Natural killer cell (primary cell): ENCODE measurements at regions of chr11 and their contacts with region 1.

Region 1: DNA sequence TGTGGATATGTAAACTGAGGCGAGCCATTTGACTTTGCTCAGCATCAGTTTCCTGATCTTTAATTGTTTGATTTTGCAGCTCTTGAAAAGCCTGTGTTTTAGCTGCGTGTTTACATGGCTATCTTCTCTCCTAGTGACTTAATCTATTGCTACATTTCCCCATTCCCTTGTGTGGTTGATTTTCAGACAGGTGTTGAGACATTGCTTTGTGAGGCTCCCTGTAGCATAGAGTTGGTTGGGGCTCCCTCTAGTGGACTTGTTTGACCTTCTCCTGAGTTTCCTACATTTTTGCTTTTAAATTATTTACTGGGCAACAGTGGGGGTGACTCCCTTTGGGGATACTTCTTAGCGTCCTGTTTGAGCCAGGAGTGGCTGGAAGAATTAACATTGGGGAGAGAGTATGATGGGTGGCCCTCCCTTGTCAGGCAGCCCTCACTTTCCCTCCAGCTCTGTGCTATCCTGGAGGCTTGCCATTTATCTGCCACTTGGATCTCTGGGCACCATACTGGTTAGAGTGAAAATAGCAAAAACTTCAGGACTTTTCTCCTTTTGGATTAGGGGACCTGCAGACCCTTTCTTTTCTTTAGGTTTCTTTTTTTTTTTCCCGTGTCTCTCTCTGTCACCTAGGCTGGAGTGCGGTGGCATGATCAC is 9.2 kb upstream of the CBL start:
- DNase-seq: peak; percentile 36 to 91
- ATAC-seq: peak; percentile 89 to 98 (median 96)
- H3K4me3 ChIP-seq: no peak overlapping the region
- H3K4me3 Mint-ChIP-seq: no peak overlapping the region
- H3K27ac ChIP-seq: no peak overlapping the region
- H3K27ac Mint-ChIP-seq: no peak overlapping the region
- H3K4me1 ChIP-seq: no peaks in the 10 kb centered on the region
- H3K4me1 Mint-ChIP-seq: peaks cover 0 to 9% of the 10 kb centered on the region in 2 donors
- H3K27me3 ChIP-seq: no peaks in the 10 kb centered on the region
- H3K27me3 Mint-ChIP-seq: peaks cover 7 to 8% of the 10 kb centered on the region in 2 donors
- CTCF ChIP-seq: peak; percentile 76

Region 2: GRCh38 chr11:119115484-119116234 is 81.3 kb before region 1 on chr11:
- intact Hi-C with region 1: no loop called
- DNase-seq: peak in 1 of 2 donors; percentile 70
- ATAC-seq: no peak
- H3K4me3 ChIP-seq: no peak overlapping the region
- H3K4me3 Mint-ChIP-seq: no peak overlapping the region
- H3K27ac ChIP-seq: no peak overlapping the region
- H3K27ac Mint-ChIP-seq: peak overlapping the region in 1 of 2 donors; percentile 63
- H3K4me1 ChIP-seq: peaks cover 9% of the 10 kb centered on the region
- H3K4me1 Mint-ChIP-seq: peaks cover 7 to 12% of the 10 kb centered on the region in 2 donors
- H3K27me3 ChIP-seq: no peaks in the 10 kb centered on the region
- H3K27me3 Mint-ChIP-seq: no peaks in the 10 kb centered on the region
- CTCF ChIP-seq: no peak

Region 3: GRCh38 chr11:119168471-119169281 is 28.3 kb before region 1 on chr11 and contains the start of gene NLRX1:
- intact Hi-C with region 1: loop called (anchors 1 kb)
- DNase-seq: peak; percentile 78 to 91
- ATAC-seq: peak; percentile 97 to 98 (median 98)
- H3K4me3 ChIP-seq: peak within 1 kb of the TSS; percentile 47
- H3K4me3 Mint-ChIP-seq: peak within 1 kb of the TSS; percentile 88
- H3K27ac ChIP-seq: peak within 1 kb of the TSS; percentile 61
- H3K27ac Mint-ChIP-seq: peak within 1 kb of the TSS; percentile 76 to 90
- H3K4me1 ChIP-seq: peaks cover 11% of the 10 kb centered on the region
- H3K4me1 Mint-ChIP-seq: peaks cover 0 to 32% of the 10 kb centered on the region in 2 donors
- H3K27me3 ChIP-seq: no peaks in the 10 kb centered on the region
- H3K27me3 Mint-ChIP-seq: no peaks in the 10 kb centered on the region
- CTCF ChIP-seq: peak; percentile 77
- total RNA-seq, gene NLRX1: 12.4 to 16.4 (median 13.8) TPM